Activated CD4-positive, alpha-beta T cell treated with anti-CD3 and anti-CD28 coated beads, Interleukin-2, amount 10 ng/mL, durations not matched to agents 24 days and 14 days (primary cell): ENCODE measurements at regions of chr2 and their contacts with region 1.

Region 1: GRCh38 chr2:186589612-186590349 is at the start of gene ITGAV:
- DNase-seq: peak; percentile 95
- H3K4me3 Mint-ChIP-seq: peak within 1 kb of the TSS; percentile 85
- H3K27ac Mint-ChIP-seq: peak within 1 kb of the TSS; percentile 80
- H3K4me1 Mint-ChIP-seq: peaks cover 19% of the 10 kb centered on the region
- H3K27me3 Mint-ChIP-seq: peaks cover 9% of the 10 kb centered on the region
- total RNA-seq, gene ITGAV: 6.9 and 8.1 TPM in 2 replicates

Region 2: DNA sequence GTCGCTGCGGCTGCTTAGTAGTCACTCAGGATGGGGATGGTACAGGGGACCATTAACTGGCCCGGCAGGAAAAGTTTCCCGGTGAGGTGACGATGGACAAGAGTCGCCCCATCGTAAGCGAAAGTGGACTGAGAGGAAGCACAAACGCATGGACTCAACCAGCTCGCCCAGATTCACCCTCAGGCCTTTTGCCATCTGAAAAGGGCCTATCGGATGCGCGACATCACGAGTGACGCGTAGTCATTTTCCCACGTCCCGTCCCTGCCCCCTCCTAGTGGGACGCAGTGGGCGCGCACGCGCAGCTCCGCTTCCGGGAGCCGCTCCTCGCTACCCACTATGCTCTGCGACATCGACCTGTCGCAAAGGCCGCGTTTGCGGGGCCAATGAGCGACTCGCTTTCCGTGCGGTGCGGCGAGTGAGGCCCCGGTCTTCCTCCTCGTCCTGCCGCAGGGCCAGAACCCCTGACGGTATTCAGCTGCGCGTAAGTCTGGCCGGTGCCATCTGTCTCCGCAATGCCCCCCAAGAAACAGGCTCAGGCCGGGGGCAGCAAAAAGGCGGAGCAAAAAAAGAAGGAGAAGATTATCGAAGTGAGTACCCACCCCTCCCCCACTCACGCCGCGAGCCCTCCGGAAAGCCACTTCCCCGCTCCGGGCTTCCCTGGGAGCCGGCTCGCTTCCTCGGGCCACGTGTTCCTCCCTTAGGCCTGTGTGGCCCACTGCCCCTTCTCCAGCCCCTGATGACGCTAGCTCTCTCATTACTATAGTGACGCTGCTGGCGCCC is 103.7 kb before region 1 on chr2 and contains the start of gene ZC3H15:
- intact Hi-C with region 1: loop called (anchors 1 kb)
- DNase-seq: peak; percentile 99
- H3K4me3 Mint-ChIP-seq: peak within 1 kb of the TSS; percentile 95
- H3K27ac Mint-ChIP-seq: peak within 1 kb of the TSS; percentile 99
- H3K4me1 Mint-ChIP-seq: peaks cover 48% of the 10 kb centered on the region
- H3K27me3 Mint-ChIP-seq: no peaks in the 10 kb centered on the region
- total RNA-seq, gene ZC3H15: 103 and 106 TPM in 2 replicates

Region 3: DNA sequence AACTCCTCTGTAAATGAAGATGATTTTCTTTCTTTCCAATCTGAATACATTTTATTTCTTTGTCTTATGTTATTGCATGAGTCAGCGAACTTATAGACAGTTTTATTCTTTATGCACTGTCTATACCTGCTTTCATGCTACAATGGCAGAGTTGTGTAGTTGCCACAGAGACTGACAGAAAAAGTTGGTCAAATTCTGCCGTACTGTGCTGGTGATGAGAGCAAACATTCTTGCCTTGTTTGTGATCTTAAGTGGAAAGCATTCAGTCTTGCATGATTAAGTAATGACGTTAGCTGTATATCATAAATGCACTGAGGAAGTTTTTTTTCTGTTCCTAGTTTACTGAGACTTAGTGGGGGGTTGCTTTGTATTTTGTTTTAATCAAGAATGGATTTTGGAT is 70.8 kb before region 1 on chr2:
- intact Hi-C with region 1: no loop called
- DNase-seq: no peak
- H3K4me3 Mint-ChIP-seq: no peak overlapping the region
- H3K27ac Mint-ChIP-seq: no peak overlapping the region
- H3K4me1 Mint-ChIP-seq: no peaks in the 10 kb centered on the region
- H3K27me3 Mint-ChIP-seq: no peaks in the 10 kb centered on the region

Region 4: DNA sequence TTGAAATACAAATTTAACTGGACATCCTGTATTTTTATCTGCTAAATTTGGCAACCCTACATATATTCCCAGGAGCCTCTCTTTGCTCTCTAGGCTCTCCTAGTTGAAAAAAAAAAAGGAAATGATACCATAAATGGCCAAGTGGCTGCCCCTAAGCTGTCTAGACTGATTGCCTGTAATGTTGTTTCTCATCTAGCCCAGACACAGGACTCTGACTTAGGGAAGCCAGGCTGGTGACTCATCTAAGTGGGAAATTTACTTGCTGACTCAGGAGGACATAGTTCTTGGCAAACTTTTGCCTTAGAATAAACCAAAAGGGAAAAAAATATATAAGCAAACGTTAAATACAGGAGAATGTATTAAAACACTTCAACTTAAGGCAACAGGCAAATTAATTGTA is 14.5 kb before region 1 on chr2:
- intact Hi-C with region 1: loop called (anchors 2 kb)
- DNase-seq: no peak
- H3K4me3 Mint-ChIP-seq: no peak overlapping the region
- H3K27ac Mint-ChIP-seq: no peak overlapping the region
- H3K4me1 Mint-ChIP-seq: peaks cover 4% of the 10 kb centered on the region
- H3K27me3 Mint-ChIP-seq: peaks cover 4% of the 10 kb centered on the region

Region 5: DNA sequence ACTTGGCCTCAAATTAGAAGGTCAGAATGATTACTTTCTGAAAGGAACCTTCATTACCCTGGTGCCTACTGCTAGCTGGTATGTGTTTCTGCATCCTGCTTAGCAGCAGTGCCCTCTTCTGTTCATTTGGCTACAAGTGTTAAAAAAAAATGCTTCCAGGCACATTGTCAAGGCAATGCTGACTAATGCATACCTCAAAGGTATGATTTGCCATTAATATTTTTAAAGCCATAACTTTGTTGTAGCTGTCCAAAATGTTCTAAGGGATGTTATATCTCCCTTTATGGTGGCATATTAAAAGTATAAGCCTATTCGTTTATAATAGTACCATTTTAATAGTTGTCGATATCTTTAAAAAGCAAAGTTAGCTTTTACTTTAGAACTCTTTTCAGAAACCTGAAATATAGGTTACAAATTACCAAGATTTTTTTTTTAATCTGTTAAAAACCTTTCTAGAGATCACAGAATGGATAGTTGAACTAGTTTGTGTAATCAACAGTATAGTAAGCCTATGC is 52.1 kb after region 1 on chr2:
- intact Hi-C with region 1: loop called (anchors 1 kb)
- DNase-seq: peak; percentile 81
- H3K4me3 Mint-ChIP-seq: no peak overlapping the region
- H3K27ac Mint-ChIP-seq: no peak overlapping the region
- H3K4me1 Mint-ChIP-seq: peaks cover 24% of the 10 kb centered on the region
- H3K27me3 Mint-ChIP-seq: no peaks in the 10 kb centered on the region